ENCODE measurements at regions of chr10 and their contacts with region 1.

Region 1: DNA sequence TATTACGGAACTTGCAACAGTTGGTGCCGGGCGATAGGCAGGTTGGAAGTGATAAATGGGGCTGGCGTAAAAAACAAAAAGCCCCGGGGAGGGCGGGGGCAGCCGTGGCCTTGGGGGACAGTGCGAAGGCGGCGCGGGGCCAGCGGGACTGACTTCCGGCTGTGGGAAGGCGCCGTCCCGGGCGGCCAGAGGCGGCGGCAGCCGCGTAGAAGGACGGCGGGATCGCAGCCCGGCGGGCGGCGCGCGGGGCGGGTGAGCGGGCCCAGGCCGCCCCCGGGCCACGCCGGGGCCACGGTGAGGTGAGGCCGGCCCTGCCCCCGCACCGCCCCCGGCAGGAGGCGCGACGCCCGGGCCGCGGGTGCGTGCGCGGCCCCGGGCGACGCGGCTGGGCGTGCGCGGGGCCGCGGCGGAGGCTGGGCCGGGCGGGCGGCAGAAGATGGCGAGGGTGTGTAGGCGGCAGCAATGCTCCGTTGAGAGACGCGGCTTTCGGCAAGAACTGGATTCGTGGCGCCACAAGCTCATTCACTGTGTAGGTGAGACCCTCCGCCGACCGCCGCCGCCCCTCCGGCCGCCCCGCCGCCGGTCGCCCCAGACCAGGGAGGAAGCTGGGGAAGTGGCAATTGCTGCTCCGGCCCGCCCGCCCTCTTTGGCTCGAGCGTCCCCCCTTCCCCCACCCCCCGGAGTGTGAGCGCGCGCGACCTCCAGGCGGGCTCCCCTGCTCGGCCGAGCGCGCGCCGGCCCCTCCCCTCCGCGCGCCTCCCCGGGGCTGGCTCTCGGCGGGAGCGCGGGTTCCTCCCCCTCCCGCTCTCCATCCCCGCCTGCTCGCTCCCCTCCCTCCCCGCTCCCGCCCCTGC is at the start of gene LCOR:
- DNase-seq: peak; percentile 62 to 94 (median 78)
- ATAC-seq: peak; percentile 65
- H3K4me3 ChIP-seq: peak within 1 kb of the TSS; percentile 71
- H3K4me3 Mint-ChIP-seq: peak within 1 kb of the TSS; percentile 94
- H3K27ac ChIP-seq: peak within 1 kb of the TSS; percentile 78 to 80
- H3K27ac Mint-ChIP-seq: peak within 1 kb of the TSS; percentile 94
- H3K4me1 ChIP-seq: peaks cover 12% of the 10 kb centered on the region
- H3K4me1 Mint-ChIP-seq: peaks cover 54% of the 10 kb centered on the region
- H3K27me3 ChIP-seq: no peaks in the 10 kb centered on the region
- H3K27me3 Mint-ChIP-seq: no peaks in the 10 kb centered on the region
- CTCF ChIP-seq: no peak
- total RNA-seq, gene LCOR: 46.0 to 56.0 TPM

Region 2: DNA sequence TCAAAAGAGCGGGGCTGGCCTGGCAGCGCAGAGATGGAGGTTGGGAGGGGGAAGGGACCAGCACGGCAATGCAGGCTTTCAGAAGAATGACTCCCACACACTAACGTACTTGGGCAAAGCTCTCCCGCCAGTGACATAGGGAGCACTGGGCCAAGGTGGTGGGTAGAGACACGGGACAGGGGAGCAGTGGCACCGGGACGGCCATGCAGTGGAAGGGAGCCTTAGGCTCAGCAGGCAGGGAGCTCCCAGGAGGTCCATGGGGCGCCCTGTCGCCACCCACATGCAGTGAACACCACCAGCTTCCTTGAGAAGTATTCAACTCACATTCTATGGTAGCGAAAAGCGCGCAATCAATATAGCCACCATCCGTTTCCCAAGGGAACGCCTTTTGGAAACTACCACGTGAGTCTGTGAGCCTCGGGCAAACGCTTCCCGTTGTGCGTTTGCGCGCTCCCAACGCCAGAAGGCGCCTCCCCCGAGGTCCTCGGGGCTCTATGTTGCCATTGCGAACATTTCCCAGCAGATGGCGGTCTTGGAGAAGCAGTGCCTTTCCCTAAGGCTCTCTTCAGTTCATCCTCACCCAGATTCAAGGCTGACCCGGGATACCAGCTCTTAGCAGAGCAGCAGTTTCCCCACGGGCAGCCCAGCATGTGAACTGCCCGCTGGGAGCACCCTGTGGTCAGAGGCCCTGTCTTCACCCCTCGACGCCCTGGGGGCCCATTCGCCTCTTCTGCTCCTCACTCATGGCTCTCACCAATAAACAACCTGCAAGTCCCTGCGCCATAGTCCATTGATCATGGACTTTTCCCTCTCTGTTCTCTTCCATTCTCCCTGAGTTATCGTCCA is 456.9 kb before region 1 on chr10:
- CTCF ChIA-PET with region 1: interaction called, 3 read pairs
- POLR2A ChIA-PET with region 1: no interaction called
- intact Hi-C with region 1: loop called in 1 of 2 experiments (anchors 10 kb)
- DNase-seq: peak; percentile 46 to 82 (median 61)
- ATAC-seq: peak; percentile 94
- H3K4me3 ChIP-seq: peak overlapping the region; percentile 59
- H3K4me3 Mint-ChIP-seq: peak overlapping the region; percentile 76
- H3K27ac ChIP-seq: no peak overlapping the region
- H3K27ac Mint-ChIP-seq: no peak overlapping the region
- H3K4me1 ChIP-seq: peaks cover 13% of the 10 kb centered on the region
- H3K4me1 Mint-ChIP-seq: peaks cover 4% of the 10 kb centered on the region
- H3K27me3 ChIP-seq: no peaks in the 10 kb centered on the region
- H3K27me3 Mint-ChIP-seq: peaks cover 11% of the 10 kb centered on the region
- CTCF ChIP-seq: peak; percentile 98

Region 3: GRCh38 chr10:96586419-96587263 is 245.5 kb before region 1 on chr10 and contains the start of gene TM9SF3:
- CTCF ChIA-PET with region 1: no interaction called
- POLR2A ChIA-PET with region 1: interaction called, 6 read pairs
- intact Hi-C with region 1: loop called in 1 of 2 experiments (anchors 5 kb)
- DNase-seq: peak; percentile 85 to 97 (median 92)
- ATAC-seq: peak; percentile 81
- H3K4me3 ChIP-seq: peak within 1 kb of the TSS; percentile 95
- H3K4me3 Mint-ChIP-seq: peak within 1 kb of the TSS; percentile 95
- H3K27ac ChIP-seq: peak within 1 kb of the TSS; percentile 96 to 98
- H3K27ac Mint-ChIP-seq: no peak within 1 kb of the TSS
- H3K4me1 ChIP-seq: peaks cover 34% of the 10 kb centered on the region
- H3K4me1 Mint-ChIP-seq: peaks cover 44% of the 10 kb centered on the region
- H3K27me3 ChIP-seq: no peaks in the 10 kb centered on the region
- H3K27me3 Mint-ChIP-seq: no peaks in the 10 kb centered on the region
- CTCF ChIP-seq: no peak
- total RNA-seq, gene TM9SF3: 92.4 to 92.7 TPM

Region 4: GRCh38 chr10:96765406-96766240 is 66.5 kb before region 1 on chr10:
- CTCF ChIA-PET with region 1: no interaction called
- POLR2A ChIA-PET with region 1: no interaction called
- intact Hi-C with region 1: loop called (anchors 1 kb)
- DNase-seq: peak; percentile 61 to 83 (median 70)
- ATAC-seq: peak; percentile 94
- H3K4me3 ChIP-seq: no peak overlapping the region
- H3K4me3 Mint-ChIP-seq: no peak overlapping the region
- H3K27ac ChIP-seq: no peak overlapping the region
- H3K27ac Mint-ChIP-seq: no peak overlapping the region
- H3K4me1 ChIP-seq: peaks cover 3% of the 10 kb centered on the region
- H3K4me1 Mint-ChIP-seq: no peaks in the 10 kb centered on the region
- H3K27me3 ChIP-seq: no peaks in the 10 kb centered on the region
- H3K27me3 Mint-ChIP-seq: peaks cover 4% of the 10 kb centered on the region
- CTCF ChIP-seq: peak; percentile 95